Breast epithelium (tissue), 4 donors: ENCODE measurements at regions of chr5 and their contacts with region 1.

Region 1: DNA sequence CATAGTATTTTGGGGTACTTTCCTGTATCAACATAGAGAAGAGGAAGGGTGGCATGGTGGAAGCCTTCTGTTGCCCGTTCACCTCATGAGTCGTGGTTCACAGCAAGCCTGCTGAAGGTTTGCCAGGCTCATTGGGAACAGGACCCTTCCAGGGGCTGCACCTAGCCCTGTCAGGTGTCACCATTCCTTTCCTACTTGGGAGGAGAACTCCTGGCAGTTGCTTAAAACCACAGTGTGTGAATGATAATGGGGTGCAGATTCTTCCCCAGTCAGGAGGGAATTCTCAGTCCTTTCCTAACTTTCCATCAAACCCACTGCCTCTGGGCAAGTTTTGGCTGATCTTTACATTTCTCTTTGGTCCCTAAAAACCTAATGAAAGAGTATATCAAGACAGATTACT is 99.4 kb upstream of the CTNND2 start:
- DNase-seq: no peak
- H3K4me3 ChIP-seq: no peak overlapping the region
- H3K27ac ChIP-seq: no peak overlapping the region
- H3K4me1 ChIP-seq: no peaks in the 10 kb centered on the region
- H3K27me3 ChIP-seq: no peaks in the 10 kb centered on the region
- CTCF ChIP-seq: no peak
- POLR2A ChIP-seq: no peak

Region 2: GRCh38 chr5:10789021-10789420 is 1214.7 kb before region 1 on chr5:
- intact Hi-C with region 1: loop called (anchors 5 kb)
- DNase-seq: no peak
- H3K4me3 ChIP-seq: no peak overlapping the region
- H3K27ac ChIP-seq: no peak overlapping the region
- H3K4me1 ChIP-seq: no peaks in the 10 kb centered on the region
- H3K27me3 ChIP-seq: no peaks in the 10 kb centered on the region
- CTCF ChIP-seq: no peak
- POLR2A ChIP-seq: no peak

Region 3: GRCh38 chr5:11985993-11986392 is 17.7 kb before region 1 on chr5:
- intact Hi-C with region 1: no loop called
- DNase-seq: no peak
- H3K4me3 ChIP-seq: no peak overlapping the region
- H3K27ac ChIP-seq: no peak overlapping the region
- H3K4me1 ChIP-seq: no peaks in the 10 kb centered on the region
- H3K27me3 ChIP-seq: no peaks in the 10 kb centered on the region
- CTCF ChIP-seq: no peak
- POLR2A ChIP-seq: no peak